ENCODE measurements at regions of chr9 and their contacts with region 1.

Region 1: DNA sequence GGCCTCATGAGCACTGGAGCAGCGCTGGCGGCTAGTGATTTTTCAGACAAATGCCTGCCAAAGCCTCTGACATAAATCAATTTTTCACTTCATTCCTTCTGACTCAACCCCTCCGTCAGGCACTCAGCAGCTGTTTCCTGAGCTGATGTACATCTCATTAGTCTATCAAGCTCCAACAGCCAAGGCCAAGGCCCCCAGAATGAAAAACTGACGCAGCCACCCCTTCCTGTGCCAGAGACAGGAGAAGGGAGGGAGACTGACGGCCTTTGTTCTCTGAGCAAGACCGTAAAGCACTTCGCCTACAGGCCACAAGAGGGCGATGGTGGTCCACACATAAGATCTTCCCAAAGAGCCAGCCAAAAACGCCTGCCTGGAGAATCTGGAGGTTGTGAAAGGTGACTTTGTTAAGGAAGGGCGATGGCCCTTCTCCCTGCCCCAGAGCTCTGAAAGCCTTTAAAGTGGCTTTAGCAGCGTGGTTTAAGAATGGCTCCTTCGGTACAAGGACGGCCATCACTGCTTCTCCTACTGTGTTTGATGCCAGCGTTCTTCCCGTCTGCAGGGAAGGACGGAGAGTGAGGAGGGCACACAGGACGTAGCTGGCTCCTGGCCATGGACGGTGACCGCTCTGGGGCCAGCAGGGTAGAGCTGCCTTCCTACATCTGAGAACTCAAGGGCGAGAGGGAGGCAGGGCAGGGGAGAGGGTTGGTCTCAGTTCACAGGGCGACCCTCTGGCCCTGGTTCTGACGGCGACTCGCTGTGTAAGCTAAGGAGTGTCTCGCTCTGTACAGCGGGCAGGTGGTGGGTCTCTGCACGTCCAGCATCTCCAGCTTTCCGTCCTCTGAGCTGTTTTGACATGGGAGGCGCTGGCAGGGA is 37.0 kb downstream of the ALG2 start:
- H3K4me3 Mint-ChIP-seq: no peak overlapping the region
- H3K27ac Mint-ChIP-seq: peak overlapping the region; percentile 25
- H3K4me1 Mint-ChIP-seq: peaks cover 79% of the 10 kb centered on the region
- H3K27me3 Mint-ChIP-seq: no peaks in the 10 kb centered on the region

Region 2: DNA sequence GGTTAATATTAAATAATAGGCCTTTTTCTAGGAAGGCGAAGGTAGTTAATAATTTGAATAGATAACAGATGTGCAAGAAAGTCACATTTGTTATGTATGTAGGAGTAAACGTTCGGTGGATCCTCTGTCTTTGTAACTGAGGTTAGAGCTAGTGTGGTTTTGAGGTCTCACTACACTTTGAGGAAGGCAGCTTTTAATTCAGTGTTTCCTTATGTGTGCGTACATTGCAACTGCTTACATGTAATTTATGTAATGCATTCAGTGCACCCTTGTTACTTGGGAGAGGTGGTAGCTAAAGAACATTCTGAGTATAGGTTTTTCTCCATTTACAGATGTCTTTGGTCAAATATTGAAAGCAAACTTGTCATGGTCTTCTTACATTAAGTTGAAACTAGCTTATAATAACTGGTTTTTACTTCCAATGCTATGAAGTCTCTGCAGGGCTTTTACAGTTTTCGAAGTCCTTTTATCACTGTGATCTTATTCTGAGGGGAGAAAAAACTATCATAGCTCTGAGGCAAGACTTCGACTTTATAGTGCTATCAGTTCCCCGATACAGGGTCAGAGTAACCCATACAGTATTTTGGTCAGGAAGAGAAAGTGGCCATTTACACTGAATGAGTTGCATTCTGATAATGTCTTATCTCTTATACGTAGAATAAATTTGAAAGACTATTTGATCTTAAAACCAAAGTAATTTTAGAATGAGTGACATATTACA is 34.1 kb before region 1 on chr9:
- intact Hi-C with region 1: no loop called
- H3K4me3 Mint-ChIP-seq: no peak overlapping the region
- H3K27ac Mint-ChIP-seq: no peak overlapping the region
- H3K4me1 Mint-ChIP-seq: no peaks in the 10 kb centered on the region
- H3K27me3 Mint-ChIP-seq: peaks cover 11% of the 10 kb centered on the region

Region 3: GRCh38 chr9:99221621-99222415 is 37.1 kb after region 1 on chr9 and contains the starts of genes ALG2 and SEC61B:
- intact Hi-C with region 1: loop called (anchors 5 kb)
- H3K4me3 Mint-ChIP-seq: peak within 1 kb of the TSS; percentile 92
- H3K27ac Mint-ChIP-seq: peak within 1 kb of the TSS; percentile 99
- H3K4me1 Mint-ChIP-seq: peaks cover 70% of the 10 kb centered on the region
- H3K27me3 Mint-ChIP-seq: no peaks in the 10 kb centered on the region

Region 4: DNA sequence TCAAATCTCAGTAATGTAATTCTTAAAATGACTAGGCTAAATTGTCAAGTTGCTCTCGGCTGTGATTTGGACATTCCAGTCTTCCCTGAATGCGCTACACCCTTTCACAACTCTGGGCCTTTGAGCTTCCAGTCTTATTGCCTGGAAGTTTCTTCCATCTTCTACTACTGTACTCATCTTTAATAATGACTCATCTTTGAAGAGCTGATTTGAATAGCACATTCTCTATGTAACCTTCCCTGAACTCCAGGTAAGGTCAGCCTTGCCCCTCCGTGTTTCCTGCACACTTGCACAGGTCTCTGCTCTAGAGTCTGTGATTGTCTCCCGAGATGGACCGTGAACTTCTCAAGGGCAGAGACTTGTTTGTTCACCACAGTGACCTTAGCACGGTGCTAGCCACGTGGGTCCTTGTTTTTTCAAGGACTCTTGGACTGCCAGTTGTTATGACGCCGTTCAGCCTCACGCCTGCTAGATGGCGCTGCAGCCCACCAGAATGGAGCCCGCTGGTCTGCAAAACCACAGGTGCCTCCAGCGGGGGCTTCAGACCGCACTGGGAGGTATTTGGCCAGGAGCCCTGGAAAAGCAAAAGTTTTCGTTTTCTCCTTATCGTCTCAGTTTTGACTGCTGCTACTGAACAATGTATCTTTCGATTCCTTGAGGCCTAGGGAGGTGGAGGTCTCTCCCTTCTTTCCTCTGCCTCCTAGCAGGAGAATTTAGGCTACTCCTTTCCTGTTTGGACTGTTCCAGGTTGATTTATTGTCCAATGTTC is 81.7 kb after region 1 on chr9:
- intact Hi-C with region 1: loop called (anchors 2 kb)
- H3K4me3 Mint-ChIP-seq: no peak overlapping the region
- H3K27ac Mint-ChIP-seq: no peak overlapping the region
- H3K4me1 Mint-ChIP-seq: peaks cover 23% of the 10 kb centered on the region
- H3K27me3 Mint-ChIP-seq: peaks cover 2% of the 10 kb centered on the region